ENCODE measurements at regions of chr10 and their contacts with region 1.

Region 1: DNA sequence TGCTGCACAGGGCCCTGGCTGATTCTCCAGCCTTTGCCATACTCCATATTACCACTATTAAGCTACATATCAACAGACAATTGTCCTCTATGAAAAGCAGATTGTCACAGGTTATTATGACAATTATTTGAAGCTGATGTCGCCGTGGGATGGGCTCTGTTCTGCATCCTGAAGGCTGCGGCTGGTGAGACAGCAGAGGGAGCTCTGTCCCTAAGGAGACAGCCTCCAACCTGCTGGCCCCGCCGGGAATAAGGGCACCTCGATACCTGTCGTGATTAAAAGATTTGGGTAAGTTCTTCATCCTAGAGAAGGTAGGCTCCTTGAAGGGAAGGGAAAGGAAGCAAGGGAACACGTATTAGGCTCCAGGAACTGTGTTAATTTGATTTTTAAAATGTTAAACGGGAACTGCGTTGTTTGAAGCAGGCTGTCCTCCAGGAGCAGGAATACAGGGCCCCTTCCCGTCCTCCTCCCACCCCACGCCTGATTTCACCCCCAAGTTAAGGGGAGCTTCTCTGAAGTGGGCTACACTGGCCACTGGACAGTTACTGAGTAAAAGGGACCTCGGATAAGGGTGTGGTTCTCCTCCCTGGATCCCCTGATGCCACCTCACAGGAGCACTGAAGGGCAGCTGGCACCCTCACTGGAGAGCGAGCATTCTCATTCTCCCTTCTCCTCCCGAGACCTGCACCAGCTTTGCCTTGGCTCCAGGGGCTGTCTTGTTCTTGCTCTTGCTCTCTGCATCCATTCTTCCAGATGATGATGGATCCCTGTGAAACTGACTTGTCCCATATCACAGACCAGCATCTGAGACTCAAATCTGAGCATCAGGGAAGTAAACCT is 11.8 kb upstream of the TIAL1 start:
- DNase-seq: peak; percentile 58 to 62
- ATAC-seq: peak; percentile 99 to 100
- H3K4me3 ChIP-seq: no peak overlapping the region
- H3K27ac ChIP-seq: peak overlapping the region; percentile 2 to 27; a peak in 1 of 6 replicates
- H3K4me1 ChIP-seq: no peaks in the 10 kb centered on the region
- CTCF ChIP-seq: peak; percentile 90
- EP300 ChIP-seq: no peak
- POLR2A ChIP-seq: no peak
- RAD21 ChIP-seq: peak; percentile 94

Region 2: DNA sequence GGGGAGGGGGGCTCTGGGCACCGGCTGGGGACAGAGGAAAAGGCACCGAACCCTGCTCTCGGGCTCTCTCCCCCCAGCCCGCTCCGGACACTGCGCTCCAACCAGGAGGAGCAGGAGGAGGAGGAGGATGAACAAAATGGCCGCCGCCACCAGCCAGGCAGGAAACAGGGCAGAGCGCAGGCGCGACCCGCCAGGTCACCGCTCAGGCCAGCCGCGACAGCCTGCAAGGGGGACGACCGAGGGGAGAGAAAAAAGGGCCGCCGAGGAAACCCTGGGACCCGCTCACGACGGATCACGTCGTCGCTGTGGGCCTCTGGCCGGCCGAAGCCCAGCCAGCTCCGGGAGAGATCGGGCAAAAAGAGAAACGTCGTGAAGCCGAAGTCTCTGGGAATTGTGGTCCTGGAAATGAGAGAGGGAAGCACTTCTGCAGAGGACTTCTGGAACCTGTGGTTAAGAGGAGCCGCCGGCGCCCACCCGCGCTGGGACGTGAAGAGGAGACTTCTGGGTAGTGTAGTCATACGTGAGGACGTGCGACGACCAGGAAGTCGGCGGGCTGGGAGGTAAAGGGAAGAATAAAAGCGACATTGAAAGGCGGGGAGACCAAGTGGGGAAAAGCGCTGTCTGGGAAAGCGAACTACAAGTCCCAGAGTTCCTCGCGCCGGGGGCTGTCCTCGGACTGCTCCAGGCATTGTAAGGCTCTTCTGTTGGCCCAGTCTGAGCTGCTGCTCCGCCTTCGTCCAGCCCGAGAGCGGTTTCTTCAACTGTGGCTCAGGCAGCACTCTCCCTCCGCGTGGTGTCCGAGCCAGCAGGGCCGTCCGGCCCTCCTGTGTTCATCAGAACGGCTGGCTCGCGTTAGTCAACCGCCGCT is 11.8 kb before region 1 on chr10 and contains the start of gene TIAL1:
- CTCF ChIA-PET with region 1: interaction called, 14 read pairs
- POLR2A ChIA-PET with region 1: interaction called, 6 read pairs
- DNase-seq: peak; percentile 94 to 100
- ATAC-seq: peak; percentile 94 to 95
- H3K4me3 ChIP-seq: peak within 1 kb of the TSS; percentile 97
- H3K27ac ChIP-seq: peak within 1 kb of the TSS; percentile 96 to 97
- H3K4me1 ChIP-seq: peaks cover 38% of the 10 kb centered on the region
- CTCF ChIP-seq: no peak
- EP300 ChIP-seq: no peak
- POLR2A ChIP-seq: peak; percentile 74
- RAD21 ChIP-seq: no peak
- polyA plus RNA-seq, gene TIAL1: 101 and 115 TPM in 2 replicates

Region 3: GRCh38 chr10:119644205-119644814 is 35.8 kb after region 1 on chr10:
- CTCF ChIA-PET with region 1: interaction called, 23 read pairs
- POLR2A ChIA-PET with region 1: no interaction called
- DNase-seq: no peak
- ATAC-seq: peak; percentile 68 to 85; a peak in 5 of 6 replicates
- H3K4me3 ChIP-seq: no peak overlapping the region
- H3K27ac ChIP-seq: no peak overlapping the region
- H3K4me1 ChIP-seq: no peaks in the 10 kb centered on the region
- CTCF ChIP-seq: 0 out of 3 replicates have a peak, but pooled peaks have one; percentile 7
- EP300 ChIP-seq: no peak
- POLR2A ChIP-seq: no peak
- RAD21 ChIP-seq: peak in 1 of 2 experiments; percentile 22; a peak in 2 of 5 replicates

Region 4: DNA sequence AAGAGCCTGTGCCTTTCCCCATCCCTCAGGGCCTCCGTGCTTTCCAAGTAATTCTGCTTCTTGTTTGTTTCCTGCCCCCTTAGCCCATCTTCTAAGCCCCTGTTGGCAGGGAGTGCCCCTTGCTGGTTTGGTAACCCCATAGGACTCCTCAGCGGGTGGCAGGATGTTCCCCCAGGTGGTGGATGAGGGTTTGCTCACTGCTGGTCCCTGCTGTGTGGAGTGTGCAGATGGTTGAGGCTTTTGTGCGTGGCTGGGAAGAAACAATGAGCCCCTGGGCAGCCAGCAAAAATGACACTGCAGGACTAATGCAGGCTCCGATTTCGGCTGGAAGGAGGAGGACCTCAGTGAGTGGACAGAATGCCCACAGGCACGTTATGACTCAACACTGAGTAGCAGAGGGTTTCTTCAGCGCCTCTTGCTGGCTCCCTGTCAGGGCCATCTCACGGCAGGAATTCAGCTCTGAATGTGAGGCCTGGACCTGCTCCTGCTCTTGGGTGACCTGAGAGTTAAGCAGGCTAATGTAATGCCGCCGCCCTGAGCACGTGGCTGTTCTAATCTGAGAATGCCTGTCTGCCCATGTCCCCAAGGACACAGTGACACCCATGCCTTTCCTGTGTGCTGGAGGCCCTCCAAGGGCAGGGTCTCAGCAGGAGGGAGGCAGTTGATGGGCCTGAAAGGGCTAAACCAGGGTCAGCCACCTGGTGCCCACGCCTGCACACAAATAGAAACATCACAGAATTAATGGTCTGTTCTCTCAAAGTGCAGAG is 59.2 kb after region 1 on chr10:
- CTCF ChIA-PET with region 1: interaction called, 36 read pairs
- POLR2A ChIA-PET with region 1: no interaction called
- DNase-seq: peak; percentile 82 to 92
- ATAC-seq: peak; percentile 92 to 94
- H3K4me3 ChIP-seq: 0 out of 3 replicates have a peak overlapping the region, but pooled peaks have one; percentile 20
- H3K27ac ChIP-seq: peak overlapping the region; percentile 84 to 91
- H3K4me1 ChIP-seq: peaks cover 83% of the 10 kb centered on the region
- CTCF ChIP-seq: peak; percentile 20; the same call in 2 of the 3 replicates
- EP300 ChIP-seq: peak in 1 of 2 experiments; percentile 25; a peak in 1 of 5 replicates
- POLR2A ChIP-seq: no peak
- RAD21 ChIP-seq: peak; percentile 36 to 53; a peak in 4 of 5 replicates

Region 5: DNA sequence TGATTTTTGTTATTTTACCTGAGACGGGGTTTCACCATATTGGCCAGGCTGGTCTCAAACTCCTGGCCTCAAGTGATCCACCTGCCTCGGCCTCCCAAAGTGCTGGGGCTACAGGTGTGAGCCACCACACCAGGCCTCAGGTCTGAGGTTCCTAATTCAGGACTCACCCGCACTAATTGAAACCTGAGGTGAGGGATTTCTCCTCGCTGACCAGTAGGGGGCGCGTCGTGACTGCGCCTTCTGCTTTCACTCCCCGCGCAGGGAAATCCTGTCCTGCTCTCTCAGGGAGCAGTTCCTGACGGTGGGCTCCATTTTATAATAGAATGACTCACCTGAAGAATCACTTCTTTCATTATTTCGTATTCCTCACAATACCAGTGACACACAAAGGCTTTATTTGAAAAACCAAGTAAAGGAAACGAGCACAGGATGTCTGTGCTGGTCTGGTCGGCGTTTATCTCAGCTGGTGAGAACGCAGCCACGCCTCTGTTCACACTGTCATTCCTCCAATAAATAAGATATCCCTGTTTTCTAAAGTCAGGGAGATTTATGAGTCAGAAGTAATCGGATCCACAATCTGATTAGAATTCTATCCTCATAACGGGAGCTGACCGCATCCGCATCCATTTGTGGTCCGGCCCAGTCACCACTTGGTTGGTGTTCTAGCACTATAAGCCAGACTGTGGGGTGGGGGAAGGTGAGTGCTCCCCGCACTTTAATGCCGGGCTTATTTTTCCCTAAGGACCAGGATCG is 78.1 kb after region 1 on chr10:
- CTCF ChIA-PET with region 1: interaction called, 12 read pairs
- POLR2A ChIA-PET with region 1: interaction called, 4 read pairs
- DNase-seq: peak; percentile 81
- ATAC-seq: peak; percentile 82 to 90
- H3K4me3 ChIP-seq: no peak overlapping the region
- H3K27ac ChIP-seq: peak overlapping the region in 1 of 2 experiments; percentile 42; a peak in 1 of 6 replicates
- H3K4me1 ChIP-seq: peaks cover 13% of the 10 kb centered on the region
- CTCF ChIP-seq: peak; percentile 92
- EP300 ChIP-seq: no peak
- POLR2A ChIP-seq: no peak
- RAD21 ChIP-seq: peak; percentile 90 to 93

Region 6: DNA sequence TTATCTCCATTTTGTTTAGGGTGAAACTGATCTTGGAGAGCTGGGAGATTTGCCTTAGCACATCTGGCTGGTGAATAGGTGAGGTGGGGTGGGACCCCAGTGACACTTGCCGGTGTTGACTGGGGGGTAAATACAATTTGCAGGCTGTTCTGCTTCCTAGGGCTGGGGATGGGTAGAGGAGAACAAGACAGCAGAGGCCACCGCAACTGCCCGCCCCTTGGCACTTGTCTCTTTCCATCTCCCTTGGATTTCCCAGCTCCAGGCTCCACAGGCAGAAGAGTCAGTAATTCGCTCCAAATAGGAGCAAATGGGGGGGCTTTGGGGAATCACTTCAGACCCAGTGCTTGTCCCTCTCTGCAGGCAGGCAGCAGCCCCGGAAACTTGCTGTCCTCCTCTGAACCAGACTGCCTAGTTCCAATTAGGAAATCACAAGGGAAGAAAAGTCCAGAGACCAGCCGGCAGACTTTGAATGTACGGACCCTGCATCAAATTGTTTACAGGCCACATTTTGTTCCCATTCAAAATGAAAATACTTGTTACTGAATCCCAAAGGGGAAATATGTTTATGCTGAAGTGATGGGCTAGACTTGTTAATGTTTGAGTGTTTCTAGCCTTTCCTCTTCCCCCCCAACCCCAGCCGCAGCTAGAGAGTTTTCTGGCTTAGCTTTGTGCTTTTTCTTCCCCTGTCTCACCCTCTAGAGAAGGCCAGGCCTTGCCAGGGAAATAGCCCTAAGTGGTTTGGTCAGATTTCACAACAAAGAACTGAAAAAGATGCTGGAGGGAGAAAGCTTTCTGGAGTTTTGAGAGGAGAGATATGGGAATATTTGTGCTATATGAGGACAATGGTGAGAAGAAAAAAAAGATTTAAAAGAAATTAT is 107.3 kb after region 1 on chr10:
- CTCF ChIA-PET with region 1: interaction called, 11 read pairs
- POLR2A ChIA-PET with region 1: no interaction called
- DNase-seq: no peak
- ATAC-seq: no peak
- H3K4me3 ChIP-seq: no peak overlapping the region
- H3K27ac ChIP-seq: no peak overlapping the region
- H3K4me1 ChIP-seq: no peaks in the 10 kb centered on the region
- CTCF ChIP-seq: no peak
- EP300 ChIP-seq: no peak
- POLR2A ChIP-seq: no peak
- RAD21 ChIP-seq: no peak

Region 7: GRCh38 chr10:119845656-119846055 is 237.1 kb after region 1 on chr10:
- CTCF ChIA-PET with region 1: interaction called, 10 read pairs
- POLR2A ChIA-PET with region 1: no interaction called
- DNase-seq: no peak
- ATAC-seq: no peak
- H3K4me3 ChIP-seq: no peak overlapping the region
- H3K27ac ChIP-seq: no peak overlapping the region
- H3K4me1 ChIP-seq: peaks cover 17% of the 10 kb centered on the region
- CTCF ChIP-seq: no peak
- EP300 ChIP-seq: no peak
- POLR2A ChIP-seq: no peak
- RAD21 ChIP-seq: no peak

Measured in A549 (cell line).